Ovary (tissue), 10 donors: ENCODE measurements at regions of chr11 and their contacts with region 1.

Region 1: DNA sequence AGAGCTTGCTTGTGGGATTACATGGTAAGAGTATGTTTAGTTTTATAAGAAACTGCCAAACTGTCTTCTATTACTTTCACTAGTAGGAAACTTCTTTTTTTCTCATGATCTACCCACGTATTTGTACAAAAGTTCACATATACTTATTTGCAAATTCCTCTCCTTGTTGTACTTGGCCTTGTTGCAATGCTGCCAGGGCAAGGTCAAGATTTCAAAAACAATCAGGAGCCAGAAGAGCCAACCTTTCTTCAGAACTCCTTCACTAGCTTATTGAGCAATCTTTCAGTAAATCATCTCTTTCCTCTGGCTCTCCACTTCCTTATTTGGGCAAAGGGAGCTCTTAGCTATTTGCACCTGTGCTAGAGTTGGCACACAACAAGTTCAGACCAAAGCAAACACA is 9.7 kb downstream of the SRSF8 start:
- DNase-seq: peak; percentile 50 to 75 (median 68)
- H3K4me3 ChIP-seq: no peak overlapping the region
- H3K27ac ChIP-seq: no peak overlapping the region
- H3K4me1 ChIP-seq: peaks cover 17% of the 10 kb centered on the region
- H3K27me3 ChIP-seq: no peaks in the 10 kb centered on the region
- CTCF ChIP-seq: no peak
- EP300 ChIP-seq: no peak
- POLR2A ChIP-seq: no peak

Region 2: GRCh38 chr11:95089620-95090542 is 13.5 kb after region 1 on chr11 and contains the start of gene ENDOD1:
- intact Hi-C with region 1: loop called in 1 of 4 experiments (anchors 1 kb)
- DNase-seq: peak; percentile 77 to 89 (median 83)
- H3K4me3 ChIP-seq: peak within 1 kb of the TSS; percentile 88
- H3K27ac ChIP-seq: peak within 1 kb of the TSS; percentile 77 to 96
- H3K4me1 ChIP-seq: peaks cover 4% of the 10 kb centered on the region
- H3K27me3 ChIP-seq: no peaks in the 10 kb centered on the region
- CTCF ChIP-seq: peak in 1 of 3 donors; percentile 31
- EP300 ChIP-seq: no peak
- POLR2A ChIP-seq: peak; percentile 50
- total RNA-seq, gene ENDOD1: 21.0 to 35.4 (median 34.3) TPM

Region 3: GRCh38 chr11:95175818-95176368 is 99.5 kb after region 1 on chr11:
- intact Hi-C with region 1: no loop called
- DNase-seq: no peak
- H3K4me3 ChIP-seq: no peak overlapping the region
- H3K27ac ChIP-seq: no peak overlapping the region
- H3K4me1 ChIP-seq: no peaks in the 10 kb centered on the region
- H3K27me3 ChIP-seq: no peaks in the 10 kb centered on the region
- CTCF ChIP-seq: no peak
- EP300 ChIP-seq: no peak
- POLR2A ChIP-seq: no peak

Region 4: GRCh38 chr11:95652002-95652472 is 575.6 kb after region 1 on chr11:
- intact Hi-C with region 1: no loop called
- DNase-seq: no peak
- H3K4me3 ChIP-seq: no peak overlapping the region
- H3K27ac ChIP-seq: no peak overlapping the region
- H3K4me1 ChIP-seq: no peaks in the 10 kb centered on the region
- H3K27me3 ChIP-seq: no peaks in the 10 kb centered on the region
- CTCF ChIP-seq: no peak
- EP300 ChIP-seq: no peak
- POLR2A ChIP-seq: no peak

Region 5: DNA sequence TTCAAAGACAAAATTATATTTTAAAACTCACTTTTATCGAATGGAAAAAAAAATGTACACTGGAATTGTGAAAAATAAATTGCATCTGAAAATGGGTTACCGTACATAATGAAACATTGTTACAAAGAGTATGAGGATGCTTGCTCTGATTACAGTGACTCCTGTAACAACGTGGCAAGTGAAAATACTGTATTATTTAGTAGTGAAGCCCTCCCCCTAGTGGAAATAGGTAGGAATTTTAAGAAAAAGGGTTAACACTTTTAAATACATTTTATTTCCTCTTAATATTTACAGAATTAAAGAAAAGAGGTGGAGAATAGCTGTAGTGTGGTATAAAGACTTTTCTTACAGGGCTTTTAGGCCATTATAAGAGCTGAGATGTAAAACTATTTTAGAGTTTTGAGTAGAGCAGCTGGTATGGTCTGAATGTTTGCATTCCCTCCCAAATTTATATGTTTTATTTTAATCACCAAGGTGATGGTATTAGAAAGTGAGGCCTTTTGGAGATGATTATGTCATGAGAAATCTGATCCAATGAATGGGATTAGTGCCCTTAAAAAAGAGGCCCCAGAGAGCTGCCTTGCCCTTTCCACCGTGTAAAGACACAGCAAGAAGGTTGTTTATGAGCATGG is 688.0 kb after region 1 on chr11:
- intact Hi-C with region 1: loop called in 2 of 4 experiments (anchors 10 kb)
- DNase-seq: no peak
- H3K4me3 ChIP-seq: no peak overlapping the region
- H3K27ac ChIP-seq: no peak overlapping the region
- H3K4me1 ChIP-seq: no peaks in the 10 kb centered on the region
- H3K27me3 ChIP-seq: no peaks in the 10 kb centered on the region
- CTCF ChIP-seq: peak; percentile 16 to 92 (median 71)
- EP300 ChIP-seq: no peak
- POLR2A ChIP-seq: no peak